K562 (cell line): ENCODE measurements at regions of chr12 and their contacts with region 1.

Region 1: DNA sequence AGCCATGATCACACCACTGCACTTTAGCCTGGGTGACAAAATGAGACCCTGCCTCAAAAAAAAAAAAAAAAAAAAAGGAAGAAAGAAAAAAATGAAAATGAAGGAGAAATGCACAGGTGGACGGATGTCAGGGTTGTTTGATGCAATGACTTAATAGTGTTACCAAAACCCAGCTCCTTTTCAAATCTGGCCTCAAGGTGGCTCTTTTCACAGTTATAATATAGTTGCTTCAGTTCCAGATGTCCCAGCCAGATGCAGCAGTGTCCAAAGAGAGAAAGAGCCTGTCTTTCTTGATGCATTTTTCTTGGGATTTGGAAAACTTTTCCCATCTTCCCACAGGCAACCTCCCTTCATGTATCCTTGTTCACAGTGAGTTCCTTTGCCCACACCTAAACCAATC is 36.5 kb downstream of the KCNMB4 start:
- DNase-seq: no peak
- ATAC-seq: no peak
- H3K4me3 ChIP-seq: no peak overlapping the region
- H3K27ac ChIP-seq: no peak overlapping the region
- H3K4me1 ChIP-seq: no peaks in the 10 kb centered on the region
- H3K27me3 ChIP-seq: peaks cover 5 to 12% of the 10 kb centered on the region in 2 experiments; a peak in 4 of 5 replicates
- CTCF ChIP-seq: peak in 1 of 3 experiments; percentile 24; a peak in 1 of 6 replicates
- EP300 ChIP-seq: no peak
- POLR2A ChIP-seq: no peak
- RAD21 ChIP-seq: peak in 1 of 2 experiments; percentile 28; a peak in 1 of 4 replicates

Region 2: GRCh38 chr12:70353780-70354660 is 48.6 kb before region 1 on chr12:
- CTCF ChIA-PET with region 1: no interaction called
- POLR2A ChIA-PET with region 1: no interaction called
- in situ Hi-C with region 1: no loop called
- intact Hi-C with region 1: no loop called
- DNase-seq: no peak
- ATAC-seq: no peak
- H3K4me3 ChIP-seq: no peak overlapping the region
- H3K27ac ChIP-seq: no peak overlapping the region
- H3K4me1 ChIP-seq: no peaks in the 10 kb centered on the region
- H3K27me3 ChIP-seq: no peaks in the 10 kb centered on the region
- CTCF ChIP-seq: no peak
- EP300 ChIP-seq: no peak
- POLR2A ChIP-seq: no peak
- RAD21 ChIP-seq: no peak

Region 3: GRCh38 chr12:70459786-70460185 is 57.2 kb after region 1 on chr12:
- CTCF ChIA-PET with region 1: no interaction called
- POLR2A ChIA-PET with region 1: no interaction called
- in situ Hi-C with region 1: no loop called
- intact Hi-C with region 1: no loop called
- DNase-seq: no peak
- ATAC-seq: no peak
- H3K4me3 ChIP-seq: no peak overlapping the region
- H3K27ac ChIP-seq: no peak overlapping the region
- H3K4me1 ChIP-seq: no peaks in the 10 kb centered on the region
- H3K27me3 ChIP-seq: no peaks in the 10 kb centered on the region
- CTCF ChIP-seq: no peak
- EP300 ChIP-seq: no peak
- POLR2A ChIP-seq: no peak
- RAD21 ChIP-seq: no peak

Region 4: GRCh38 chr12:70549340-70550179 is 147.0 kb after region 1 on chr12:
- CTCF ChIA-PET with region 1: no interaction called
- POLR2A ChIA-PET with region 1: no interaction called
- in situ Hi-C with region 1: no loop called
- intact Hi-C with region 1: loop called (anchors 10 kb)
- DNase-seq: no peak
- ATAC-seq: no peak
- H3K4me3 ChIP-seq: no peak overlapping the region
- H3K27ac ChIP-seq: no peak overlapping the region
- H3K4me1 ChIP-seq: no peaks in the 10 kb centered on the region; a peak in 2 of 5 replicates
- H3K27me3 ChIP-seq: no peaks in the 10 kb centered on the region
- CTCF ChIP-seq: no peak
- EP300 ChIP-seq: no peak
- POLR2A ChIP-seq: no peak
- RAD21 ChIP-seq: no peak